ENCODE measurements at regions of chr17 and their contacts with region 1.

Region 1: DNA sequence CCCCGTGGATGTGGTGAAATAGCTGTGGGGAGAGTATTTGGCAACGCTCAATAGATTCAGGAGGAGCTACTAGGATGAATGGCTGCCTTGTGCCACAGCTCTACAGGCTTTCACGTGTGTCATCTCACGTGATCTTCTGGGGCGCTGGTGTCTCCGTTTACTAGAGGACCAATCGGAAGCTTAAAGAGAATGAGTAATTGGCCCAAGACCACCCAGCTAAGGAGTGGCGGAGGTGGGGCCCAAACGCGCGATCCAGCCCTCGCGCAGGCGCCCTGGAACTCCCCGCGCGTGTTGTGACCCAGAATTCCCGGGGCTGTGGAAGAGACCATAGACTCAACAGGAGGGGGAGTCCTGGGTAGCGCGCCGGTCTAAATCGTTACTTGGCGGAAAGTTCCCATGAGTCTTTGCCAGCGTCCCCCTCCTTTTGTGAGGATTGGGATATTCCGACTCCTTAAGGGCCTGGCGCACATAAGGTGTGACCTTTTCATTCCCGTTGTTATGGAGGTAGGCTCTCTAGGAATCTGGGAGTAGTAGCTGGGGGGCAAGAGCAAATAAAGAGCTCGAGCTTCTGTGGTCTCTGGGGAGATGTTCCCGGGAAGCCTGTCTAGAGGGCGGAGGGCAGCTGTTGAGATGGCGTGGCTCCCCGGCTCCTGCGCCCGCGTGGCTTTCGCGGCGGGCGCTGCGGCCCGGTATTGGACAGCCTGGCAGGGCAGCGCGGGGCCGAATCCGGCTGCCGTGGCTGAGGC is 23.4 kb downstream of the TRPV2 start:
- DNase-seq: peak; percentile 93 to 96
- ATAC-seq: peak; percentile 87 to 92
- H3K4me3 ChIP-seq: peak overlapping the region; percentile 84 to 98 (median 90)
- H3K27ac ChIP-seq: peak overlapping the region; percentile 86 to 92 (median 88)
- H3K4me1 ChIP-seq: peaks cover 16 to 17% of the 10 kb centered on the region in 2 donors
- H3K27me3 ChIP-seq: no peaks in the 10 kb centered on the region
- CTCF ChIP-seq: peak in 2 of 5 experiments; percentile 20 to 25
- POLR2A ChIP-seq: peak; percentile 80 to 87

Region 2: GRCh38 chr17:16215273-16215964 is 223.3 kb before region 1 on chr17 and contains the start of gene NCOR1:
- in situ Hi-C with region 1: no loop called
- intact Hi-C with region 1: loop called (anchors 5 kb)
- DNase-seq: peak; percentile 87 to 90
- ATAC-seq: peak; percentile 88 to 89
- H3K4me3 ChIP-seq: peak within 1 kb of the TSS; percentile 87 to 100 (median 94)
- H3K27ac ChIP-seq: peak within 1 kb of the TSS; percentile 93 to 97 (median 96)
- H3K4me1 ChIP-seq: peaks cover 47% of the 10 kb centered on the region in 2 donors
- H3K27me3 ChIP-seq: no peaks in the 10 kb centered on the region
- CTCF ChIP-seq: peak in 2 of 5 experiments; percentile 47 to 49
- POLR2A ChIP-seq: peak; percentile 76 to 79
- total RNA-seq, gene NCOR1: 122 to 152 (median 132) TPM

Region 3: DNA sequence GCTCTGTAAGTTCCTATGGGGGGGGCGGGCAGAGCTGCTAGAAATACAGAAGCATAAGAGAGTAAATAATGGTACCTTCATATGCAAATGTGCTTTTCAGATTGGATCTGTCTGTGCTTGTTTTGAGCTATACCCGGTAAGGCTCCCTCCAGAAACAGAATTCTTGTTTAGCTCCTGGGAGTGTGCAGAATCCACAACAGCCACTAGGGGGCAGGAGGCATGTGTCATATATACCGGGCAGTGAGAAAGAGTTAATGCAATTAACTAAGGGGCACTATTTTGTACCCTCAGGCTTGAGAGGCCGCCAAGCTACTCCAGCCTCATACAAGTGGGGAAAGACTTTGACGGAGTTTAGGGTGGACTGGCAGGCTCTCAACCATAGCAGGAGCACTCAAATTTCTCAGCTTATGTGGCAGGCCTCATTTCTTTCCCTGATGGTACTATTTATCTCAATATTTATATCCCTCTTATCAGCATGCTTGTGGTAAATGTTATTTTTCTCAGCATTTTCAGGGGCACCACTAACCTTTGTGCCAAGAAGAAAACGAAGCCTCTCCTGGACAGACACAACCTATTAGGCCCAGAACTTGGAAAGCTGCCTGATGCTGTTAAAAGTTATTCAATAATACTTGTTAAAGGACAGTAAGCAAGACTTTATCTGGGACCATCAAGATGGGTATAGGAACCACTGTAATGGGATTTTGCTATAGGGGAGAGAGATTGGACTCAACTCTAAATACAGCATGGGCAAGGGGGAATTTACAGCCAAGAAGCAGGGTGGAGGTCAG is 74.8 kb before region 1 on chr17:
- in situ Hi-C with region 1: no loop called
- intact Hi-C with region 1: loop called (anchors 5 kb)
- DNase-seq: peak; percentile 48 to 69
- ATAC-seq: peak; percentile 82 to 91
- H3K4me3 ChIP-seq: no peak overlapping the region
- H3K27ac ChIP-seq: peak overlapping the region in 3 of 4 donors; percentile 25 to 56 (median 39)
- H3K4me1 ChIP-seq: peaks cover 0 to 6% of the 10 kb centered on the region in 2 donors
- H3K27me3 ChIP-seq: no peaks in the 10 kb centered on the region
- CTCF ChIP-seq: peak; percentile 79 to 95 (median 89)
- POLR2A ChIP-seq: no peak

Region 4: DNA sequence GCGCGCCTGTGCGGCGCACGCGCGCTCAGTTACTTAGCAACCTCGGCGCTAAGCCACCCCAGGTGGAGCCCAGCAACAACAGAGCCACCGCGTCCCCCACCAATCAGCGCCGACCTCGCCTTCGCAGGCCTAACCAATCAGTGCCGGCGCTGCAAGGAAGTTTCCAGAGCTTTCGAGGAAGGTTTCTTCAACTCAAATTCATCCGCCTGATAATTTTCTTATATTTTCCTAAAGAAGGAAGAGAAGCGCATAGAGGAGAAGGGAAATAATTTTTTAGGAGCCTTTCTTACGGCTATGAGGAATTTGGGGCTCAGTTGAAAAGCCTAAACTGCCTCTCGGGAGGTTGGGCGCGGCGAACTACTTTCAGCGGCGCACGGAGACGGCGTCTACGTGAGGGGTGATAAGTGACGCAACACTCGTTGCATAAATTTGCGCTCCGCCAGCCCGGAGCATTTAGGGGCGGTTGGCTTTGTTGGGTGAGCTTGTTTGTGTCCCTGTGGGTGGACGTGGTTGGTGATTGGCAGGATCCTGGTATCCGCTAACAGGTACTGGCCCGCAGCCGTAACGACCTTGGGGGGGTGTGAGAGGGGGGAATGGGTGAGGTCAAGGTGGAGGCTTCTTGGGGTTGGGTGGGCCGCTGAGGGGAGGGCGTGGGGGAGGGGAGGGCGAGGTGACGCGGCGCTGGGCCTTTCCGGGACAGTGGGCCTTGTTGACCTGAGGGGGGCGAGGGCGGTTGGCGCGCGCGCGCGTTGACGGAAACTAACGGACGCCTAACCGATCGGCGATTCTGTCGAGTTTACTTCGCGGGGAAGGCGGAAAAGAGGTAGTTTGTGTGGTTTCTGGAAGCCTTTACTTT is 57.9 kb before region 1 on chr17 and contains the start of gene UBB:
- in situ Hi-C with region 1: loop called in 1 of 4 experiments (anchors 5 kb)
- intact Hi-C with region 1: loop called (anchors 2 kb)
- DNase-seq: peak; percentile 97 to 98
- ATAC-seq: peak; percentile 94 to 95
- H3K4me3 ChIP-seq: peak within 1 kb of the TSS; percentile 77 to 85 (median 78)
- H3K27ac ChIP-seq: peak within 1 kb of the TSS; percentile 85 to 94 (median 91)
- H3K4me1 ChIP-seq: peaks cover 37 to 39% of the 10 kb centered on the region in 2 donors
- H3K27me3 ChIP-seq: no peaks in the 10 kb centered on the region
- CTCF ChIP-seq: peak in 3 of 5 experiments; percentile 15 to 28 (median 18)
- POLR2A ChIP-seq: peak; percentile 95 to 97
- total RNA-seq, gene UBB: 1,099 to 1,543 (median 1,420) TPM

Region 5: DNA sequence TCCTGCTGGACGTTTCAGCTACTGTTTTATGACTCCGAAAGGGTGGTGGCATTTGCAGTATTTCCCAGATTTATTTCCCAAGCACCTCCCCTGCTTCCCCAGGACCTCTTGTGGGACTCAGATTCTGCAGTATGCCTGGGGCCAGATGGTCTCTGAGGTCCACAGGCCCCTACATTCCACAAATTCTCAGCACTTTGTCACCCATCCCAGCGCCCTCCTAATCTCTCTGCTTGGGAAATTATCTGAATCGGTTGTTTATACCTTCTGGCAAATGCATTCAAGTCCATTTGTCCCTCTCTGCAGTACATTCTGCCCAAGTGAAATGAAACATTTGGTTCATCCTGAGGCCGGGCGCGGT is 35.6 kb after region 1 on chr17:
- in situ Hi-C with region 1: no loop called
- intact Hi-C with region 1: no loop called
- DNase-seq: no peak
- ATAC-seq: no peak
- H3K4me3 ChIP-seq: no peak overlapping the region
- H3K27ac ChIP-seq: no peak overlapping the region
- H3K4me1 ChIP-seq: peaks cover 7 to 12% of the 10 kb centered on the region in 2 donors
- H3K27me3 ChIP-seq: peaks cover 0 to 15% (median 2%) of the 10 kb centered on the region in 3 donors
- CTCF ChIP-seq: no peak
- POLR2A ChIP-seq: no peak

Region 6: DNA sequence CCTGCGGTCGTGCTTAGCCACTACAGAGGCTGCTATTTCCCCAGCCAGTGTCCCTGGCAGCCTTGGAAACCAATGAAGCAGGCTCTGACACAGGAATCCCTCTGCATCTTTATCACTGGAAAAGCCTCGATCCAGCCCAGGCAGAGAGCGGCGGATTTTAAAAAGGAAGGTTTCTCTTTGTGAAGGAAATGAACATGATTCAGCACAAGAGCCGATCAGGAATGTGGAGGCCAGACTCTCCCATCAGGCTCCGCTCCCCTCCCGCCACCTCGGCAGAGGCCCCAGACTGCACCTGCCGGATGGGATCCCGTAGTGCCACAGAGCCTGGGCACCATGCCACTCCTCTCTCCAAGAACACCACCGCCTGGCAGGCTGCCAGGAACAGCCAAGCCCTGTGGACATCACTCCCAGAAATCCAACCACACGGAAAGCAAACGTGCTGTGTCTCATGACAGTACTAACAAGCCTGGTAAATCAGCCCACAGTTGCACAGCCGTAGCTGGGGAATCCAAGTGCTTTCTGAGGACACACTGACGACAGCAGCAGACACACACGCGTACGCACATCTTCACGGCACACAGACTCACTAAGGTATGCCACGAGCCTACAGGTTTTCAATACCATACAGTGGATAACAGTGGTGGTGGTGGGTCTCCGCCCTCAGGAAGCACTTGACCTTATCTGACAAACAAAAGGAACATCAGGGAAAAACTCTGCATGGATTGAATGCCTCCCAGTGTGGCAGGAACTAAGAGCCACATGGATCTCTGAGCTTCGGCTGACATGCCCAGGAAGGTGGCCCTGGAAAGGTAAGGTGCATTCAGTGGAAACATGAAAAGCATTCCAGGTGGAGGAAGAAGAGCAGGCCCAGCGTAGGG is 47.9 kb after region 1 on chr17:
- in situ Hi-C with region 1: no loop called
- intact Hi-C with region 1: loop called (anchors 5 kb)
- DNase-seq: peak; percentile 88 to 93
- ATAC-seq: peak; percentile 96 to 98
- H3K4me3 ChIP-seq: peak overlapping the region; percentile 25 to 41 (median 26)
- H3K27ac ChIP-seq: peak overlapping the region; percentile 53 to 76 (median 58)
- H3K4me1 ChIP-seq: peaks cover 24 to 35% of the 10 kb centered on the region in 2 donors
- H3K27me3 ChIP-seq: peaks cover 0 to 4% (median 0%) of the 10 kb centered on the region in 3 donors
- CTCF ChIP-seq: no peak
- POLR2A ChIP-seq: peak in 1 of 2 donors; percentile 10

Region 7: GRCh38 chr17:16537130-16537458 is 98.4 kb after region 1 on chr17:
- in situ Hi-C with region 1: no loop called
- intact Hi-C with region 1: loop called (anchors 5 kb)
- DNase-seq: no peak
- ATAC-seq: no peak
- H3K4me3 ChIP-seq: peak overlapping the region in 1 of 4 donors; percentile 79
- H3K27ac ChIP-seq: peak overlapping the region in 1 of 4 donors; percentile 91
- H3K4me1 ChIP-seq: no peaks in the 10 kb centered on the region
- H3K27me3 ChIP-seq: no peaks in the 10 kb centered on the region
- CTCF ChIP-seq: peak in 1 of 5 experiments; percentile 1
- POLR2A ChIP-seq: no peak

Region 8: DNA sequence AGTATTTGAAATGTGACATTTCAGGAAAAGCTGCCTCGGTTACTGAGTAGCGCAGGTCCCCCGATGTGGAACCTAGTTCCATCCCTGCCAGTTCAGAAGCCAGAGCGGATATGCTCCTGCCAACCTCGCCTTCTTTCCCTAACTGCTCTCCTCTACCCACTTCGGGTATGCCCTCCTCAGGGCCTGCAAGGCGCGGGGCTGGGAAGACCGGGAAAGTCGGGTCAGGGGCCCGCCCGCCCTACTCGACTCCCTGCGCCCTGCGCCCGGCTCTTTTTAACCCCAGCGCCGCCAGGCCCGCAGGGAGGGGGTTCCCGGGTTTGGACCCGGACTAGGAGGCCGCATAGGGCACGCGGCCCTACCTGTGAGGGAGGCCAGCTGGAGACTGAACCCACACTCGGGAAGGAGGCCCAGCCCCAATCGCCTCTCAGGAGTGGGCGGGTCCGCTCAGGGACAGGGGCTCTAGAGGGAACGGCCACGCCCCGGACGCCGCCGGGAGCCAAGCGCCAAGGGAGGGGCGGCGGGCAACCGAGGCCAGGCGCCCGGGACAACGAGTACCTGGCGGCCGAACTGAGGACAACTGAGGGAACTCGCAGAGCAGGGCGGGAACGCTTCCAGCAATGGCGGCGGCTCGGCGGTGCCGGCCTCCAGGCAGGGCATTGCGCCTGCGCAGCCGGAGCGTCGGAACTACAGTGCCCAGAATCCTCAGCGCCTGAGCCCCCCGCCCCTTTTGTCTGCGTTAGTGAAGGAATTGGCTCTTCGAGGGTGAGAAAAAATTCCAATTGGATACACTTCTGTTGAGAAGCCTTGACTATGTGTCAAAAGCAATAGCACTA is 214.7 kb after region 1 on chr17 and contains the start of gene ZNF624:
- in situ Hi-C with region 1: no loop called
- intact Hi-C with region 1: loop called (anchors 5 kb)
- DNase-seq: peak; percentile 94 to 99
- ATAC-seq: peak; percentile 94
- H3K4me3 ChIP-seq: peak within 1 kb of the TSS; percentile 66 to 93 (median 82)
- H3K27ac ChIP-seq: peak within 1 kb of the TSS; percentile 93 to 99 (median 96)
- H3K4me1 ChIP-seq: peaks cover 0 to 4% of the 10 kb centered on the region in 2 donors
- H3K27me3 ChIP-seq: no peaks in the 10 kb centered on the region
- CTCF ChIP-seq: no peak
- POLR2A ChIP-seq: peak; percentile 78 to 88
- total RNA-seq, gene ZNF624: 0.86 to 2.2 (median 0.94) TPM

Measured in gastrocnemius medialis (tissue), 4 donors.